A673 (cell line): ENCODE measurements at regions of chr6 and their contacts with region 1.

Region 1: GRCh38 chr6:33029328-33030184 is 20.2 kb upstream of the HLA-DOA start:
- DNase-seq: no peak
- H3K4me3 ChIP-seq: no peak overlapping the region
- H3K27ac ChIP-seq: no peak overlapping the region
- H3K4me1 ChIP-seq: no peaks in the 10 kb centered on the region
- H3K27me3 ChIP-seq: peaks cover 68% of the 10 kb centered on the region
- CTCF ChIP-seq: no peak

Region 2: DNA sequence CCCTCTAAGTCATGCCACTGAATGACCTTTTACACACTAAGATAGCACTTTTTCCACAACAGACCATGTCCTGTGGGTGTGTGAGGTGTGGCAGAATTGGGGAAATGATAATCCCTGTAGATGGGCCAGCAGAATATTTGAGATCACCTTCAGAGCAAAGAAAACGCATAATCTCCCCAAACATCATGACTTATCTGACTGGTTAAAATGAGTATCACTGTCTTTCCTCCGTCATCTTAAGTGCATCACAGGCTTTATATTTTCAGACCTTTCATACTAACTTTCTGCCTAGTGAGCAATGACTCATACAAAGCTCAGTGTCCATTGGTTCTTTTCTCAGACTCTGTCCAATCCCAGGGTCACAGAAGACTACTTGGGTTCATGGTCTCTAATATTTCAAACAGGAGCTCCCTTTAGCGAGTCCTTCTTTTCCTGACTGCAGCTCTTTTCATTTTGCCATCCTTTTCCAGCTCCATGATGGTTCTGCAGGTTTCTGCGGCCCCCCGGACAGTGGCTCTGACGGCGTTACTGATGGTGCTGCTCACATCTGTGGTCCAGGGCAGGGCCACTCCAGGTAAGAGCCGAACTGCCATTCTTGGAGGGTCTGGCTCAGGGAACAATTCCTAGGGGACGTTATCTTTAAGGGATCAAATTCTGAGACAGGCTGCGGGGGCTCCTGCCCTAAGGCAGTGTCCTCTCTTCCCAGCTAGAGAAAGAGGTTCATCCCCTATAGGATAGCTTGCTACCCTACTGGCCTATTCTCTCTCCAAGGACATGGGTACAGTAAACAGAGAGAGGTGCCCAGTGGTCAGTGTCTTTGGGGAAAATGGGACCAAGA is 46.2 kb after region 1 on chr6 and contains the start of gene HLA-DPB1:
- CTCF ChIA-PET with region 1: no interaction called
- POLR2A ChIA-PET with region 1: no interaction called
- intact Hi-C with region 1: loop called (anchors 10 kb)
- DNase-seq: peak; percentile 50
- H3K4me3 ChIP-seq: no peak within 1 kb of the TSS
- H3K27ac ChIP-seq: no peak within 1 kb of the TSS
- H3K4me1 ChIP-seq: no peaks in the 10 kb centered on the region
- H3K27me3 ChIP-seq: peaks cover 16% of the 10 kb centered on the region
- CTCF ChIP-seq: no peak
- total RNA-seq, gene HLA-DPB1: 2.3 and 2.7 TPM in 2 replicates

Region 3: GRCh38 chr6:33215271-33216116 is 185.9 kb after region 1 on chr6:
- CTCF ChIA-PET with region 1: no interaction called
- POLR2A ChIA-PET with region 1: no interaction called
- intact Hi-C with region 1: no loop called
- DNase-seq: no peak
- H3K4me3 ChIP-seq: no peak overlapping the region
- H3K27ac ChIP-seq: no peak overlapping the region
- H3K4me1 ChIP-seq: peaks cover 9% of the 10 kb centered on the region
- H3K27me3 ChIP-seq: no peaks in the 10 kb centered on the region
- CTCF ChIP-seq: no peak